Mammary epithelial cell (primary cell): ENCODE measurements at regions of chr11 and their contacts with region 1.

Region 1: DNA sequence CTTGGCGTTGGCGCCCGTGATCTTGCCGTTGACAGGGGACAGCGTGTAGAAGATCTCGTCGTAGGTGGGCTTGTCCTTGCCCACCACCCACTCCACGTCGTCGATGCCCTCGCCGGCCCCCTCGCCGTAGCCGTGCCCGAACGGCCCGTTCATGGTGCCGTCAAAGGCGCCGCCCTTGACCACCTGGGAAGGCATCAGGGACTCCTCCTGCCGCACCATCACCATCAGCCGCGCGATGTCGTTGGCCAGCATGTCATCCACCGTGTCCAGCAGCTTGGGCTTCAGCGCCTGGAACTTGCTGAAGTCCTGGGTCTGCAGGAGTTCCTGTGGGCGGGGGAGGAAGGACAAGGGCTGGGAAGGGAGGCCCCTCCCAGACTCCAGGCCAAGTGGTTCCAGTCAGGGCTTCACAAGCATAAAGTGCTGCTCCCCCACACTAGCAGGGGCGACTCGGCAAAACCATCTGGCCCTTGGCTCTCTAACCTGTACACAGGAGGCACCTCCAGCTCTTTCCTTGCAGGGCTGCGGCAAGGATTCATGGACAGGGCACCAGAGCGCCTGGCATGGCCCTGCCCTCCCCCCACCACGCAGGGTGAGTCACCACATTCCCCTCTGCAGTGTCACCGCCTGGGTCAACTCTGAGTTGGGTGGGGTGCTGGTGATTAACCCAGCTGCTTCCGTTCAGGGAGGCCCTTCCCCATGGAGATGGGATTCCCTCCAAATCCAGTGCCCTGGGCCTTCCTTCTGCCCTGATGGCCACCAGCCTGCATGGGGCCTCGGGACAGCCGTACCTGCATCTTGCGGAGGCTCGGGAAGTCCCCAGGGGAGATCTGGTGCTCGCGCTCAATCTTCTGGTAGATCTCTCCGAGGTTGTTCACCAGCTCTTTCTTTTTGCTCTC is 10.3 kb upstream of the CDC42BPG start:
- DNase-seq: peak; percentile 93
- H3K4me3 ChIP-seq: no peak overlapping the region
- H3K27ac ChIP-seq: peak overlapping the region; percentile 68
- H3K4me1 ChIP-seq: peaks cover 48% of the 10 kb centered on the region
- H3K27me3 ChIP-seq: no peaks in the 10 kb centered on the region
- CTCF ChIP-seq: no peak

Region 2: GRCh38 chr11:64793271-64794172 is 61.3 kb before region 1 on chr11:
- CTCF ChIA-PET with region 1: no interaction called
- dilution Hi-C with region 1: loop called (anchors 5 kb)
- in situ Hi-C with region 1: no loop called
- intact Hi-C with region 1: no loop called
- DNase-seq: no peak
- H3K4me3 ChIP-seq: no peak overlapping the region
- H3K27ac ChIP-seq: no peak overlapping the region
- H3K4me1 ChIP-seq: no peaks in the 10 kb centered on the region
- H3K27me3 ChIP-seq: no peaks in the 10 kb centered on the region
- CTCF ChIP-seq: no peak

Region 3: DNA sequence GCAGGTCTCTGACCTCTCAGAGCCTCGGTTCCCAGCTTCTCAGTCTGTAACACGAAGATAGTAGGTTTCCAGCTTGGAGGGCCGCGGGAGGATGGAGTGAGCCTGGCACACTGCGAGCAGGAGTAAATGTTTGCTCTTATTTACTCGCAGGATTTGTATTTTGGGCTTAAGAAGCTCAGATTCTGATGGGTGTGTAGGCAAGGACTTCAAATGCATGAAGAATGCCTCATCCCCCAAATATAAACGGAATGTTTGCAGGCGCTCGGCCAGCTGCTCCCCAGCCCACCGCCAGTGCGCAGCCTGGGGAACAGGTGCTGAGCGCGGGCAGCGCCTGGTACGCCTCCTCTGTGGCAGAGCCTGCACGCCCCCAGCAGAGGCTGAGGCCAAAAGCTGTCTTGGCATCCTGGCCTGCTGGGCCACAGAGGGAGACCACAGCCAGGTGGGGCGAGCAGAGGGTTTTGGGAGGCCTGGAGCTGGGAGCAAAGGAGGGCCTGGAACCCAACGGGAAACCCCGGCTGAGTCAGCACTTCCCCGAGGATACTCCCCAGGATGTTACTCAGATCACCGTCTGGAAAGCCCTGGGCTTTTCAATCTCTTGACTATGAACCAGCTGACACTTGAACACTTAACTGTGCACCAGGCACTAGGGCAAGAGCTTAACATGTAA is 14.3 kb after region 1 on chr11:
- CTCF ChIA-PET with region 1: interaction called, 4 read pairs
- dilution Hi-C with region 1: no loop called
- in situ Hi-C with region 1: no loop called
- intact Hi-C with region 1: loop called (anchors 2 kb)
- DNase-seq: peak; percentile 96
- H3K4me3 ChIP-seq: no peak overlapping the region
- H3K27ac ChIP-seq: peak overlapping the region; percentile 72
- H3K4me1 ChIP-seq: peaks cover 68% of the 10 kb centered on the region
- H3K27me3 ChIP-seq: no peaks in the 10 kb centered on the region
- CTCF ChIP-seq: no peak

Region 4: GRCh38 chr11:64878494-64879243 is 23.9 kb after region 1 on chr11 and contains the start of gene EHD1:
- CTCF ChIA-PET with region 1: no interaction called
- dilution Hi-C with region 1: no loop called
- in situ Hi-C with region 1: no loop called
- intact Hi-C with region 1: loop called (anchors 1 kb)
- DNase-seq: peak; percentile 96
- H3K4me3 ChIP-seq: peak within 1 kb of the TSS; percentile 64 to 99 (median 99)
- H3K27ac ChIP-seq: peak within 1 kb of the TSS; percentile 46
- H3K4me1 ChIP-seq: peaks cover 27% of the 10 kb centered on the region
- H3K27me3 ChIP-seq: no peaks in the 10 kb centered on the region
- CTCF ChIP-seq: peak; percentile 18 to 73
- total RNA-seq, gene EHD1: 71.2 to 172 TPM

Region 5: DNA sequence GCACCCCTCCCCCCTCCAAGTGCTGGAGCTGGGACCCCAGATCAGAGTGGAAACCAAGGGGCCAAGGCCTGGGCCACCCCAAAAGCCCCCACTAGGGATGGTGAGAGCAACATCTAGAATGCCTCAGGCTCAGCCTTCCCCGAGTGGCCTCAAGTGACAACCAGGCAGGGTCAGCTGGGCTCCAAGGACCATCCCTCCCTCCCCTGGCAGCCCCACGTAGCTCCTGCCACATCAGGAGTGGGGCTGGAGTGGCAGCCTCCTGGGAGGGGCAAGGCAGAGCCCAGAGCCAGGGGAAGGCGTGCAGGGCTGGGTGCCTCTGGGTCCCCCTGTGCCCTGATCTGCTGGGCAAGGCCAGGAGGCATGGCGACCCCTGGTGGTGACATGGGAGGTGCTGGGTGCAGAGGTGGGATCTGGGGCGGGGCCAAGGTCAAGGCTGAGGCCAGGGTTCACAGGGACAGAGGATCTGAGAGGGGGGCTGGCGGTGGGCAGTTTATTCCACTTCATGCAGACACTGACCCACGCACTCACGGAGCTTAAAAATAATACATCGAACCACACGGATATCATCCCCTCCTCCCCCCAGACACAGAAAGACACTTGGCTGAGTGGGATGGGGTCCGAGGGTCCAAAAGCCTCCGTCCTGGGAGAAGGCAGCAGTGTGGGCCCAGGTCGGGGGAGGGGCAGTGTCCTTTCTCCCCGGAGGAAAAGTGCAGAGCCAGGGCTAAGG is 39.5 kb after region 1 on chr11:
- CTCF ChIA-PET with region 1: no interaction called
- dilution Hi-C with region 1: loop called (anchors 5 kb)
- in situ Hi-C with region 1: loop called (anchors 5 kb)
- intact Hi-C with region 1: no loop called
- DNase-seq: peak; percentile 39
- H3K4me3 ChIP-seq: no peak overlapping the region
- H3K27ac ChIP-seq: no peak overlapping the region
- H3K4me1 ChIP-seq: no peaks in the 10 kb centered on the region
- H3K27me3 ChIP-seq: no peaks in the 10 kb centered on the region
- CTCF ChIP-seq: peak; percentile 79 to 92